Activated B cell treated with CpG ODN at 0.5 μM for 24 hours (primary cell): ENCODE measurements at regions of chr12 and their contacts with region 1.

Region 1: DNA sequence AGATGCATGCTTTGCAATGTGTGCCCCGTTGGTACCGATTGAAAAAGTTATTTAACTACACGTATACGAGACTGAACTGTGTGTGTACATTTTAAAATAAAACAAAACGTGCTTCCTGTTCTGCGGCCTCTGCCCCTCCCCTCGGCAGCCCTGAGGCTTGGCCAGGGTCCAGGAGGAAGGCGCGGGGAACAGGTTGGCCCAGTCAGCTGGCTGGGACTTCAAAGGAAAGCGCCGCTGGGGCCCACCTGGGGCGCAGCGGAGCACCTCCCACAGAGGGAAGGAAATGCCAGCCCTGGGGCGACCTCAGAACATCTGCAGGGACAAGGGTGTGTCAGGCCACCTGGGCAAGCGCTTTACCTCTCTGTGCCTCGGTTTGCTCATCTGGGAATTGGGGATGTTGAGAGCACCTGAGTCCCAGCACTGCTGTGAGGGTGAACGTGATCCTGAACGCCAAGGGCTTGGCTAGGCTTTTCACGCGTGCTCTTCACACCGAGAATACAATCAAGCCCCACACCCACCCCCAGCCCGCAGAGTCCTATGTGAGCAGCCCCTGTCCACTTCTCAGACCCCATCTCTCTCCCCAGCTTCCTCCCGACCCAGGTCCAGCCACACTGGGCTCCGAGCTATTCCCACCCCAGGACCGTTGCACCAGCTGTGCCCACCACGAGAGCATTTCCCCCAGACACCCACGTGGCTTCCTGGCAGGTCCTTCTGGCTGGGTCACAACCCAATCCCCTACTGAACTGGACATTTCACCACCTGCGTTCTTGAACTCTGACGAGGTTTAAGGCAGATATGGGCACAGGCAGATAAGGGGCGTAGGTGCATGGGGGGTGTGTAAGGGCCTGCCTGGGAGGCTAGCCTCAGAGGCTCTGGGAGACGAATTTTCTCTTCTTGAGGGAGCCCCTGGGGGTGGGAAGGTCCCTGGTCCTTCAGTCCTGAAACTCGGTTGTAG is 41.9 kb upstream of the NCOR2 start:
- DNase-seq: peak; percentile 45
- ATAC-seq: peak; percentile 67
- H3K4me3 Mint-ChIP-seq: peak overlapping the region; percentile 61
- H3K27ac Mint-ChIP-seq: peak overlapping the region; percentile 53
- H3K4me1 Mint-ChIP-seq: peaks cover 23% of the 10 kb centered on the region
- H3K27me3 Mint-ChIP-seq: peaks cover 7% of the 10 kb centered on the region
- CTCF ChIP-seq: no peak

Region 2: GRCh38 chr12:124592472-124593160 is 16.7 kb before region 1 on chr12:
- CTCF ChIA-PET with region 1: no interaction called
- POLR2A ChIA-PET with region 1: no interaction called
- intact Hi-C with region 1: loop called (anchors 2 kb)
- DNase-seq: peak; percentile 30
- ATAC-seq: peak; percentile 90
- H3K4me3 Mint-ChIP-seq: peak overlapping the region; percentile 54
- H3K27ac Mint-ChIP-seq: peak overlapping the region; percentile 72
- H3K4me1 Mint-ChIP-seq: peaks cover 36% of the 10 kb centered on the region
- H3K27me3 Mint-ChIP-seq: peaks cover 2% of the 10 kb centered on the region
- CTCF ChIP-seq: no peak

Region 3: GRCh38 chr12:124633273-124633966 is 24.1 kb after region 1 on chr12:
- CTCF ChIA-PET with region 1: no interaction called
- POLR2A ChIA-PET with region 1: no interaction called
- intact Hi-C with region 1: loop called (anchors 2 kb)
- DNase-seq: no peak
- ATAC-seq: no peak
- H3K4me3 Mint-ChIP-seq: no peak overlapping the region
- H3K27ac Mint-ChIP-seq: no peak overlapping the region
- H3K4me1 Mint-ChIP-seq: peaks cover 4% of the 10 kb centered on the region
- H3K27me3 Mint-ChIP-seq: peaks cover 16% of the 10 kb centered on the region
- CTCF ChIP-seq: no peak